Lower leg skin (tissue), 4 donors: ENCODE measurements at regions of chr5 and their contacts with region 1.

Region 1: GRCh38 chr5:53442961-53443360 is 37.5 kb upstream of the FST start:
- DNase-seq: no peak
- H3K4me3 ChIP-seq: no peak overlapping the region
- CTCF ChIP-seq: no peak
- POLR2A ChIP-seq: no peak

Region 2: GRCh38 chr5:52925001-52925400 is 518.0 kb before region 1 on chr5:
- intact Hi-C with region 1: loop called (anchors 5 kb)
- DNase-seq: no peak
- H3K4me3 ChIP-seq: no peak overlapping the region
- CTCF ChIP-seq: no peak
- POLR2A ChIP-seq: no peak

Region 3: GRCh38 chr5:53543401-53543800 is 100.4 kb after region 1 on chr5:
- intact Hi-C with region 1: no loop called
- DNase-seq: no peak
- H3K4me3 ChIP-seq: no peak overlapping the region
- CTCF ChIP-seq: no peak
- POLR2A ChIP-seq: no peak